ENCODE measurements at regions of chr17 and their contacts with region 1.

Region 1: DNA sequence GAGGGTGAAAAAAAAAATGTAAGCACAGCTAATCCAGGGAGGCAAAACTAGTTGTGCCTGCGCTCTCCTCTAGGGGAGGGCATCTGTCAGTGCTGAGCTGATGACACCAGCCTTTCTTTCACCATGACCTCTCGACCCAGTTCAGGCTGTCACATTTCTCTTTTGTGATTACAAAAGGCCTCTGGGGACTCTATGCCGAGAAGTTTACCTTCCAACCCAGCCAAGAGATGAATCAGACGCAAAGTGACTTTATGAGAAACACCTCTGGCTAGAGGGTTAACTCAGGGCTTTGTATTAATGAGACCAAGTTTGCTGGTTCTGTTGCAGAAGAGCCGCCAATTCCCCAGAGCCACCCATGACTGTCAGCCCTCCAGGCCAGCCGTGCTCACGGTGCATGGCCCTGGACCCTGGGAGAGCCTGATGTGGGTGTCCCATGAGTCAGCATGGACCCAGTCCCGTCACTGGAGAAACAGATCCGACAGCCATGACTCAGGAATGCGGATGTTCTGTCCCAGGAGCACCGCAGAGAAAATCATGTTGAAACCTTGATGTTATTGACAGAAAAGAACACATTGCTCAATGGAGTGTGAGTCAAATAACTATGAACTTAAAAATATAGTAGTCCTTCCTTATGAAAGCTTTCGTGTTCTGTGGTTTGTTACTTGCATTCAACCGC is 437.2 kb downstream of the HS3ST3B1 start:
- DNase-seq: peak; percentile 97
- ATAC-seq: peak; percentile 99
- H3K4me3 ChIP-seq: peak overlapping the region; percentile 23 to 54 (median 28); a peak in 5 of 6 replicates
- H3K27ac ChIP-seq: peak overlapping the region; percentile 88
- H3K4me1 ChIP-seq: peaks cover 30% of the 10 kb centered on the region
- H3K27me3 ChIP-seq: no peaks in the 10 kb centered on the region
- CTCF ChIP-seq: peak; percentile 55
- EP300 ChIP-seq: peak; percentile 27 to 81; a peak in 2 of 4 replicates
- POLR2A ChIP-seq: peak in 1 of 2 experiments; percentile 42; a peak in 1 of 4 replicates
- RAD21 ChIP-seq: no peak; the same call in 1 of the 2 replicates

Region 2: GRCh38 chr17:14630046-14630445 is 108.1 kb before region 1 on chr17:
- CTCF ChIA-PET with region 1: no interaction called
- POLR2A ChIA-PET with region 1: no interaction called
- in situ Hi-C with region 1: no loop called
- intact Hi-C with region 1: loop called (anchors 10 kb)
- DNase-seq: no peak
- ATAC-seq: no peak
- H3K4me3 ChIP-seq: no peak overlapping the region
- H3K27ac ChIP-seq: no peak overlapping the region
- H3K4me1 ChIP-seq: peaks cover 19% of the 10 kb centered on the region
- H3K27me3 ChIP-seq: no peaks in the 10 kb centered on the region
- CTCF ChIP-seq: no peak
- EP300 ChIP-seq: no peak
- POLR2A ChIP-seq: no peak
- RAD21 ChIP-seq: no peak

Region 3: DNA sequence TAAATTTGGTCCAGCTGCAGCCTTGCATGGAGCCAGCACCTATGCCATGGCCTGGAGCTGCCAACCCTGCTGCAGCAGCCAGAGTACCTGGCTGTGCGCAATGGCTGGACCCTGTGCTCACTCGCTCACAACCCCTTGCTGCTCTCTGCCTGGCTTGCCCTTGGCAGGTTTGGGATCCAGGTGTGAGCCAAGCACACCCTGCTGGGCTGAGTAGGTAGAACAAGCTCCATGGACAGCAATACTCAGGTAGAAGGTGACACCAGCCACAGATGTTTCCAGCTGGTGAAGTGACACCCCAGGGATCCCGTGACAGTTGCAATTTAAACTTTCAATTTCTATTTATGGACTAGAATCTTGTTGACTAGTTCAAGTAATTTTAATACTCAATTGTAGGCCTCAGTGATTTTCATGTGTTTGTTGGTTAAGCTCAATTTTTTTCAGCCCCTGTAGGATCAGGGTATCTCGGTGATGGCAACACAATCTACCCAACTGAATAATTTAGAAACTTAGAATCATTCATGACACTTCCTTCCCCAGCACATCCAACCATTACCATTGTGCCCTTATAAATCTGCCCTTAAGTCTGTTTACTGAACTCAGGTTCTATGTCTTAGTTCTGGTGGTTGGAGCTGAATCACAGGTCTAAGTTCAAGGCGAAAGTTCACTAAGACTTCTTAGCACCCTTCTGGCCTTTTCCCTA is 47.0 kb after region 1 on chr17:
- CTCF ChIA-PET with region 1: no interaction called
- POLR2A ChIA-PET with region 1: no interaction called
- in situ Hi-C with region 1: no loop called
- intact Hi-C with region 1: loop called (anchors 2 kb)
- DNase-seq: peak; percentile 47
- ATAC-seq: peak; percentile 99
- H3K4me3 ChIP-seq: no peak overlapping the region
- H3K27ac ChIP-seq: no peak overlapping the region
- H3K4me1 ChIP-seq: no peaks in the 10 kb centered on the region
- H3K27me3 ChIP-seq: peaks cover 0 to 5% of the 10 kb centered on the region in 2 experiments; a peak in 1 of 5 replicates
- CTCF ChIP-seq: peak; percentile 89
- EP300 ChIP-seq: no peak
- POLR2A ChIP-seq: no peak
- RAD21 ChIP-seq: peak; percentile 64

Measured in HepG2 (cell line).